Lower leg skin (tissue), 4 donors: ENCODE measurements at regions of chr12 and their contacts with region 1.

Region 1: DNA sequence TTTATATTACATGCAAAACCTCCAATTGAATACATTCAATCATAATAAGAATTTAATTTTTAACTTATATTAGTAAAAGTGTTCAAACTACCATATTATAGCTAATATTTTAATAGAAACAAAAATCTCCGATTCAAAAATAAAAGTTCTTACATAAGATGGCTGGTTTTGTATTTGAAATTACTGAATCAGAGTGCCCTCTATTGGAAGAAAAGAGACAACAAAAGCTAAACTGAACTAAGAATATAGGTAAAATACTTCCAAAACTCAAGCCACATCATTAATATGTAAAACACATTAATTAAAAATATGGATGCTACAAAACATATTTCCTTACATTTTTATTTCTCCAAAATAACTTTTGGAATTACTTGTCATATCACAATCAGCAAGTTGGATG is 120.3 kb downstream of the GARIN6 start:
- DNase-seq: no peak
- H3K4me3 ChIP-seq: no peak overlapping the region
- CTCF ChIP-seq: no peak
- POLR2A ChIP-seq: no peak

Region 2: DNA sequence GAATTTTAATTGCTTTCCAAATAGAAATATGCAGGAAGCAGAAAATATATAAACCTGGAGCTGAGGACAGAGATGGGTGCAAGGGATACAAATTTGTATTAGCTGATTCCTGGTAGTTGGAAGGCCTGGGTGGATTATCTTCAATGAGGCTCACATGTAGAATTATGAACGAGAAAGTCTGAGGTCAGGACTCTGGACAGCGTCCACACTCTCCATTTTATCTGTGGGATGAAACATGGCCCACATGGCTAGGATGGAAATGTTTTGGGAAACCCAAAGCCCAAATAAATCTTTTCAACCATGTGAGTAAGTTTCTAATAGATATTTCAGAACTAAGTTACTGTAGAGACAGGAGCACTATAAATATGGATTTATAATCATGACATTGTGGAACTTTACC is 866.6 kb before region 1 on chr12:
- intact Hi-C with region 1: loop called (anchors 5 kb)
- DNase-seq: no peak
- H3K4me3 ChIP-seq: no peak overlapping the region
- CTCF ChIP-seq: no peak
- POLR2A ChIP-seq: no peak